Astrocyte of the cerebellum (primary cell): ENCODE measurements at regions of chr21 and their contacts with region 1.

Region 1: DNA sequence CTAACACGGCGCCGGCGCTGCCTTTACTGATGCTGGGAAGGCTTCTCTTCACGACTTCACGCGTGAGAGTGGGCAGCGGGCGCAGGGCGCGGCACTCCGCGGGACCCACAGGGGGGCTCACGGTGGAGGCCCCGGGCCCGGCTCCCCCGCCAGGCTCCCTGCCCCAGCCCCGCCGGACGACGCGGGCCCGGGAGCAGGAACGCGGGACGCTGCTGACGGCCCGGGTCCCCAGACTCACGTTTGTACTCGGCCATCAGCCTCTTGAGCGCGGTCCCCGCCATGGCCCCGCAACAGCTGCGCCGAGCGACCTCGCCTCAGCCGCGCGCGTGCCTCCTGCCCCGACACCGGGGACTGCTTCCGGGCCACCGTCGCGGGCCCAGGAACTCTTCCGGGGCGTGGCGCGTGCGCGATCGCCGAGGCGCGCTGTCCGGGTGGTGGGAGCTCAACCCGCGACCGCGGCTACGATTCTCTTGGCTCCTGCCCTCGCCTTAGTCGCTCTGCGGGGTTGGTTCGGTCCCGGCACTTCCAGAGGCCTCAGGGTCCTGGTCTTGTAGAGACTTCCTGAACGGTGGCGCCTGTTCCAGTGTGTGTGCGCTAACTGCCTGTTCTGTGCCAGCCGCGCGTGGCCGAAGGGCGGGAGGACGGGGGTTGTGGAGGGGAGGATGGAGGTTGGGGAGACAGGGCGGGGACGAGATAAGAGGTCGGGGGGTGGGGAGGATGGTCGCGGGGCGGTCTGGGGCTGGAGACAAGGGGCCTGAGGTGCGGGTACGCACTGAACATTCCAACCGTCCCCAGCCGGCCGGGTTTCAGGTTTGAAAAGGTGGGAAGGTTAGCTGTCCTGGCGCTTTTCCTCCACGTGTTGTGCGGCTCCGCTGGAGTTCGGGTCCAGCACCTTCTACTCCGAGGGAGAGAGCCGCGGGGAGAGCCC is at the start of gene UBE2G2:
- DNase-seq: no peak
- H3K4me3 ChIP-seq: peak within 1 kb of the TSS; percentile 81
- CTCF ChIP-seq: no peak

Region 2: GRCh38 chr21:44854664-44855446 is 53.1 kb after region 1 on chr21:
- in situ Hi-C with region 1: loop called (anchors 5 kb)
- DNase-seq: no peak
- H3K4me3 ChIP-seq: no peak overlapping the region
- CTCF ChIP-seq: no peak

Region 3: GRCh38 chr21:44873356-44874239 is 71.9 kb after region 1 on chr21 and contains the start of gene PTTG1IP:
- in situ Hi-C with region 1: loop called (anchors 10 kb)
- DNase-seq: peak; percentile 90
- H3K4me3 ChIP-seq: peak within 1 kb of the TSS; percentile 89
- CTCF ChIP-seq: no peak